T-cell (primary cell): ENCODE measurements at regions of chr3 and their contacts with region 1.

Region 1: DNA sequence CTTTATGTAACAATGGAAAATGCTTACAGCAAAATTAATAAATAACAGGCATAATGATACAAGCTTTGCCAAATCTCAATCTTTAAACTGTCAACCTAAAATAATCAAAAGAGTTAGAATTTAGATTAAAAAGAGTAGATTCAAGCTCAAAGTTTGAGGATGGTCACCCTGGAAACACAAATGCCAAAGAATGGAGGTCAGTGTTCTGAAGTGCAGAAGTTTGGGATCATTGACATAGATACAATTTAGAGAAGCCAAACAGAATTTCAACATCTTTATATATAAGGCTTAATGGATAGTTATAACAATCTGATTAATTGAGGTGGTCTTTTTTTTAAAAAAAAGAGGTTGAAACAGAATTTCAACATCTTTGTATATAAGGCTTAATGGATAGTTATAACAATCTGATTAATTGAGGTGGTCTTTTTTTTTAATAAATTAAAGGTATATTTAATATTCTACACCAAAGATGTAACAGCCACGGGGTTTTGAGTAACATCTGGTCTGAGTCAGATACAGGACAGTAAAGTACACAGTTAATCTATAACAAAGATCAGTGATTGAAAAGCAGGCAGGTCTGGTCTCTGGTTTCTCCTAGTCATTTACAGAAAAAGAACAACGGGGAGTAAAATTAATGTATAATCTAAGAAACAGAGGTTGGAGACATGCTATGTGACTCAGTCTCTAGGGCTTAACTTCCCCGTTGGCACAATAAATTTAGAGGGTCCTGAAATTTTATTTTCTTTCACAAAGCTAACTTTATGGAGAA is 490.7 kb downstream of the GBE1 start:
- DNase-seq: no peak
- ATAC-seq: no peak
- H3K4me3 ChIP-seq: no peak overlapping the region
- H3K4me3 Mint-ChIP-seq: no peak overlapping the region
- H3K27ac ChIP-seq: no peak overlapping the region
- H3K27ac Mint-ChIP-seq: no peak overlapping the region
- H3K4me1 ChIP-seq: no peaks in the 10 kb centered on the region
- H3K4me1 Mint-ChIP-seq: no peaks in the 10 kb centered on the region
- H3K27me3 ChIP-seq: no peaks in the 10 kb centered on the region
- H3K27me3 Mint-ChIP-seq: no peaks in the 10 kb centered on the region

Region 2: GRCh38 chr3:80649170-80649569 is 621.6 kb before region 1 on chr3:
- CTCF ChIA-PET with region 1: no interaction called
- POLR2A ChIA-PET with region 1: no interaction called
- DNase-seq: no peak
- ATAC-seq: no peak
- H3K4me3 ChIP-seq: no peak overlapping the region
- H3K4me3 Mint-ChIP-seq: no peak overlapping the region
- H3K27ac ChIP-seq: no peak overlapping the region
- H3K27ac Mint-ChIP-seq: no peak overlapping the region
- H3K4me1 ChIP-seq: no peaks in the 10 kb centered on the region
- H3K4me1 Mint-ChIP-seq: no peaks in the 10 kb centered on the region
- H3K27me3 ChIP-seq: no peaks in the 10 kb centered on the region
- H3K27me3 Mint-ChIP-seq: no peaks in the 10 kb centered on the region

Region 3: GRCh38 chr3:81249540-81250029 is 21.2 kb before region 1 on chr3:
- CTCF ChIA-PET with region 1: no interaction called
- POLR2A ChIA-PET with region 1: no interaction called
- DNase-seq: no peak
- ATAC-seq: no peak
- H3K4me3 ChIP-seq: no peak overlapping the region
- H3K4me3 Mint-ChIP-seq: no peak overlapping the region
- H3K27ac ChIP-seq: no peak overlapping the region
- H3K27ac Mint-ChIP-seq: no peak overlapping the region
- H3K4me1 ChIP-seq: no peaks in the 10 kb centered on the region
- H3K4me1 Mint-ChIP-seq: no peaks in the 10 kb centered on the region
- H3K27me3 ChIP-seq: no peaks in the 10 kb centered on the region
- H3K27me3 Mint-ChIP-seq: no peaks in the 10 kb centered on the region

Region 4: DNA sequence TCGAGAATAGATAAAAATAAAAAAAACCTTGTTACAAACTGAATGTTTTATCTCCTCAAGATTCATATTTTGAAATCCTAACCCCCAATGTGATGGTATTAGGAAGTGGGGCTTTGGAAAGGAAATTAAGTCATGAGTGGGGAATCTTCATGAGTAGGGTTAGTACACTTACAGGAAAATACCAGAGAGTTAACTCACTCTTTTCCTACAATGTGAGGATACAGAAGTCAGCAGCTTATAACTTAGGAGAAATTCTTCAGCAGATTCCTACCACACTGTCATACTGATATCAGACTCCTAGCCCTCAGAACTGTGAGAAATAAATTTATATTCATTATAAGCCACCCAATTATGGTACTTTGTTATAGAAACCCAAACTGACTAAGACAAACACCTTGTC is 37.5 kb after region 1 on chr3:
- CTCF ChIA-PET with region 1: no interaction called
- POLR2A ChIA-PET with region 1: interaction called in 1 of 2 experiments, 10 read pairs
- DNase-seq: no peak
- ATAC-seq: no peak
- H3K4me3 ChIP-seq: no peak overlapping the region
- H3K4me3 Mint-ChIP-seq: no peak overlapping the region
- H3K27ac ChIP-seq: no peak overlapping the region
- H3K27ac Mint-ChIP-seq: no peak overlapping the region
- H3K4me1 ChIP-seq: no peaks in the 10 kb centered on the region
- H3K4me1 Mint-ChIP-seq: no peaks in the 10 kb centered on the region
- H3K27me3 ChIP-seq: no peaks in the 10 kb centered on the region
- H3K27me3 Mint-ChIP-seq: no peaks in the 10 kb centered on the region

Region 5: GRCh38 chr3:81352867-81353545 is 82.2 kb after region 1 on chr3:
- CTCF ChIA-PET with region 1: no interaction called
- POLR2A ChIA-PET with region 1: no interaction called
- DNase-seq: no peak
- ATAC-seq: no peak
- H3K4me3 ChIP-seq: no peak overlapping the region
- H3K4me3 Mint-ChIP-seq: no peak overlapping the region
- H3K27ac ChIP-seq: no peak overlapping the region
- H3K27ac Mint-ChIP-seq: no peak overlapping the region
- H3K4me1 ChIP-seq: no peaks in the 10 kb centered on the region
- H3K4me1 Mint-ChIP-seq: no peaks in the 10 kb centered on the region
- H3K27me3 ChIP-seq: no peaks in the 10 kb centered on the region
- H3K27me3 Mint-ChIP-seq: no peaks in the 10 kb centered on the region

Region 6: DNA sequence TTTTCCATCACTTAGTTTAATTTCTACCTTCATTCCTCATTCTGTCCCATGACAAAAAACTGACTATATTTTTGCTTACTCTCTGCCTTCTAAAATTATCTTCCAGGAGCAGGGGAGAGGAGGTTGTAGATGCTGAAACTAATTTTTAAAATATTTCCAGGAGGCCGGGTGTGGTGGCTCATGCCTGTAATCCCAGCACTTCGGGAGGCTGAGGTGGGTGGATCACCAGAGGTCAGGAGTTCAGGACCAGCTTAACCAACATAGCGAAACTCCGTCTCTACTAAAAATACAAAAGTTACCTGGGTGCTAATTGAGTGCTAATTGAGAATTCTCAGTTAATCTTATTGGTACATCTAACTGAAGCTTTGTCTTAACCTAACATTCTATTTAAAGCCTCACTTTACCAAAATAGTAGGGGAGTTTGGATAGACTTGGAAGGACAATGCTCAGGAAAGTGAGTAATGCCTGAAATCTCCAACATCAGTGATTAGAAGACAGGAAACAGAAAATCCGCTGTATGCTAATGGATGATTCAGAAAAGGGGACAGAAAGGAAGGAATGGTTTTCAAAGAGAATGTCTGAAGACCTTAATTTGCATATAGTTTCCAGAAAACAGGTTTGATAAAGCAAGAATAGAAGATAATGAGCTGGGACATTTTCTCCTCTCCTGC is 154.5 kb after region 1 on chr3:
- CTCF ChIA-PET with region 1: no interaction called
- POLR2A ChIA-PET with region 1: no interaction called
- DNase-seq: no peak
- ATAC-seq: no peak
- H3K4me3 ChIP-seq: no peak overlapping the region
- H3K4me3 Mint-ChIP-seq: no peak overlapping the region
- H3K27ac ChIP-seq: no peak overlapping the region
- H3K27ac Mint-ChIP-seq: no peak overlapping the region
- H3K4me1 ChIP-seq: no peaks in the 10 kb centered on the region
- H3K4me1 Mint-ChIP-seq: no peaks in the 10 kb centered on the region
- H3K27me3 ChIP-seq: no peaks in the 10 kb centered on the region
- H3K27me3 Mint-ChIP-seq: no peaks in the 10 kb centered on the region